ENCODE measurements at regions of chr9 and their contacts with region 1.

Region 1: GRCh38 chr9:35814841-35815543 is at the start of gene HINT2:
- DNase-seq: peak; percentile 97
- H3K4me3 Mint-ChIP-seq: peak within 1 kb of the TSS; percentile 89
- H3K27ac Mint-ChIP-seq: peak within 1 kb of the TSS; percentile 96
- H3K4me1 Mint-ChIP-seq: peaks cover 33% of the 10 kb centered on the region
- H3K27me3 Mint-ChIP-seq: no peaks in the 10 kb centered on the region
- total RNA-seq, gene HINT2: 49.4 and 49.7 TPM in 2 replicates

Region 2: GRCh38 chr9:35071814-35072460 is 743.1 kb before region 1 on chr9:
- intact Hi-C with region 1: loop called (anchors 10 kb)
- DNase-seq: peak; percentile 72
- H3K4me3 Mint-ChIP-seq: peak overlapping the region; percentile 91
- H3K27ac Mint-ChIP-seq: peak overlapping the region; percentile 88
- H3K4me1 Mint-ChIP-seq: peaks cover 43% of the 10 kb centered on the region
- H3K27me3 Mint-ChIP-seq: no peaks in the 10 kb centered on the region

Region 3: GRCh38 chr9:35603987-35604577 is 210.9 kb before region 1 on chr9:
- intact Hi-C with region 1: loop called (anchors 10 kb)
- DNase-seq: peak; percentile 99
- H3K4me3 Mint-ChIP-seq: peak overlapping the region; percentile 84
- H3K27ac Mint-ChIP-seq: peak overlapping the region; percentile 93
- H3K4me1 Mint-ChIP-seq: peaks cover 32% of the 10 kb centered on the region
- H3K27me3 Mint-ChIP-seq: no peaks in the 10 kb centered on the region

Region 4: GRCh38 chr9:35732122-35732799 is 82.7 kb before region 1 on chr9 and contains the starts of genes CREB3 and TLN1:
- intact Hi-C with region 1: loop called (anchors 1 kb)
- DNase-seq: peak; percentile 97
- H3K4me3 Mint-ChIP-seq: no peak within 1 kb of the TSS
- H3K27ac Mint-ChIP-seq: peak within 1 kb of the TSS; percentile 90
- H3K4me1 Mint-ChIP-seq: peaks cover 25% of the 10 kb centered on the region
- H3K27me3 Mint-ChIP-seq: no peaks in the 10 kb centered on the region
- total RNA-seq, gene CREB3: 34.3 and 34.5 TPM in 2 replicates
- total RNA-seq, gene TLN1: 253 and 267 TPM in 2 replicates

Region 5: GRCh38 chr9:35756275-35757225 is 58.4 kb before region 1 on chr9:
- intact Hi-C with region 1: loop called (anchors 2 kb)
- DNase-seq: peak; percentile 69
- H3K4me3 Mint-ChIP-seq: peak overlapping the region; percentile 98
- H3K27ac Mint-ChIP-seq: peak overlapping the region; percentile 98
- H3K4me1 Mint-ChIP-seq: peaks cover 29% of the 10 kb centered on the region
- H3K27me3 Mint-ChIP-seq: no peaks in the 10 kb centered on the region

Region 6: GRCh38 chr9:35766997-35767396 is 48.0 kb before region 1 on chr9:
- intact Hi-C with region 1: no loop called
- DNase-seq: no peak
- H3K4me3 Mint-ChIP-seq: no peak overlapping the region
- H3K27ac Mint-ChIP-seq: no peak overlapping the region
- H3K4me1 Mint-ChIP-seq: no peaks in the 10 kb centered on the region
- H3K27me3 Mint-ChIP-seq: no peaks in the 10 kb centered on the region

Region 7: GRCh38 chr9:35954942-35955546 is 140.1 kb after region 1 on chr9:
- intact Hi-C with region 1: no loop called
- DNase-seq: peak; percentile 26
- H3K4me3 Mint-ChIP-seq: no peak overlapping the region
- H3K27ac Mint-ChIP-seq: no peak overlapping the region
- H3K4me1 Mint-ChIP-seq: no peaks in the 10 kb centered on the region
- H3K27me3 Mint-ChIP-seq: peaks cover 37% of the 10 kb centered on the region